ENCODE measurements at regions of chr17 and their contacts with region 1.

Region 1: DNA sequence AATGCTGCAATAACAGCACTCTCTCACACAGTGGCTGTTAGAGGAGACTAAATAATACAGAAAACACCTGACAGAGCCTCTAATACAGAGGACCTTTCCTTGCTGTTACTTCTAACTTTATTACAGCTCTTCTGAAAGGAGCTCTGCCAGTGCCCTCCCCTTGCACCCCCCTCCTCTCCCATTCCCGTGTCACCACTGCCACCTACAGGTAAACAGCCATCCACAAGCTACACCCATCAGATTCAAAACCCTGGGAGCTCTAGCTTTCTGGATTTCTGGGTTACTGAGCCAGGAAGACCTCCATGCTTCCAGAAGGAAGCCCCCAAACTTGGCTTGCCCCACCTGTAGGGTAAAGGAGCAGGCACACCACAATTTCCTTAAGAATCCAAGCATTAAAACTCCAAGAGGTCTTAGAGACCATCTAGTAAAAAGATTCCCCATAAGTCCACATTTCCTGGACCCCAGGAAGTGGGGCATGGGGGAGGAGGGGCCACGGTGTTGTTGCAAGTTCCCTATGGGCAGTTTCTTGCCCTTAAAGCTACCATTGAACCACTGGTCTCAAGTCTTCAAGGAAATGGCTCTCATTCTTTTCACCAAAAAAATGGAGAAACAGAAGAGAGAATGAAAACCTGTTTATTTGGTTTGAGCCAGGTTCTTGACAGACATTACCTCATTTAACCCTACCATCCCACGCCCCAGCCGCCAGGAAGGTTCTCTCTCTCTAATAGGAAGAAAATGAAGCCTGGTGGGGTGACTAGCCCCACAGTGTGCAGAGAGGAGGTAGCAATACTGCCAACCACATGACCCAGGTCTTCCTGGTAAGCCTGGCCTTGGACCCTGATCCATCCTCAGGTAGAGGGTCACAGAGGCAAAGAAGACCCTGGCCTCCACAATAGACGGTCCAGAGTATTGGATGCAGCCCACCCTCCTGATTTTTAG is 52.8 kb downstream of the TOM1L2 start:
- DNase-seq: no peak
- H3K4me3 ChIP-seq: no peak overlapping the region
- H3K27me3 ChIP-seq: no peaks in the 10 kb centered on the region
- CTCF ChIP-seq: peak; percentile 89

Region 2: DNA sequence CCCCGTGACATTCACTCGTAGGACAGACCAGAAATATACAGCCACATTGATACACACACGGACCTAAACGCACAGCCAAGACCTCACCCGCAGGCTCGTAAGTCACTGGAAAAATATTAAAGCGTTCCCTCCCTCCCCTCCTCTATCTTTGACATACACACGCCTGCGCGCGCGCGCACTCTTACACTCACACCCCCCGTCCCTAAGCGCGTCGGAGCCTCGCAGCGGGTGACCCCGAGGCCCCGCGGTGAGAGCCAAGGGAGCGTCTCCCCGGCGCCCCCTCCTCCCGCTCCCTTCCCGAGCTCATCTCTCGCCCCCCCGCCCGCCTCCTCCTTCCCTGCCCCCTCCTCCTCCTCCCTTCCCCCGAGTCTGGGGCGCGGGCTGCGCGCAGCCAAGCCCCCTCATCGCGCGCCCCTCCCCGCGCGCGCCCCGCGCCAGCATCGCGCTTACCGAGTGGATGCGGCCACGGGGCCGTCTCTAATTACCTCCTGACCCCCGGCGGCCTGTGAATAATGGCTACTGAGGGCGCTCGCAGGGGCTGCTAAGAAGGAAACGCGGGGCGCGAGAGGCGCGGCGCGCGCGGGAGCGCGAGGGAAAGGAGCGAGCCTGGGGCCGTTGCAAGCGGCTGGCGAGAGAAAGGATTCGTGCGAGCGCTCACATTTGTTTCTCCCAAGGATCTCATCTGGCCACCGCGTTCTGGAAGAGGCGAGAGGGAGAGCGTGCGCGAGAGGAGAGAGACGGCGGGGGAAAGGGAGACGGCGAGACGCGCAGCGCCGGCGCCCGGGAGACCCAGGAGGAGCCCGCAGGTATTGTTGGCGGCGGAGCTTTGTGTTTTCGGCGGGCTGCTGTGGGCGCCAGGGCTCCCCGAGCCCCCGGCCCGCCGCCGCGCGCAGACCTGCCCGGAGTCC is 195.8 kb before region 1 on chr17:
- CTCF ChIA-PET with region 1: no interaction called
- POLR2A ChIA-PET with region 1: no interaction called
- DNase-seq: no peak
- H3K4me3 ChIP-seq: peak overlapping the region; percentile 47
- H3K27me3 ChIP-seq: no peaks in the 10 kb centered on the region
- CTCF ChIP-seq: no peak

Region 3: GRCh38 chr17:17812211-17813057 is 107.0 kb before region 1 on chr17:
- CTCF ChIA-PET with region 1: interaction called, 17 read pairs
- POLR2A ChIA-PET with region 1: no interaction called
- DNase-seq: no peak
- H3K4me3 ChIP-seq: no peak overlapping the region
- H3K27me3 ChIP-seq: no peaks in the 10 kb centered on the region
- CTCF ChIP-seq: peak; percentile 98

Region 4: GRCh38 chr17:17877529-17878358 is 41.7 kb before region 1 on chr17:
- CTCF ChIA-PET with region 1: interaction called, 10 read pairs
- POLR2A ChIA-PET with region 1: no interaction called
- DNase-seq: peak; percentile 64
- H3K4me3 ChIP-seq: no peak overlapping the region
- H3K27me3 ChIP-seq: no peaks in the 10 kb centered on the region
- CTCF ChIP-seq: peak; percentile 25

Region 5: DNA sequence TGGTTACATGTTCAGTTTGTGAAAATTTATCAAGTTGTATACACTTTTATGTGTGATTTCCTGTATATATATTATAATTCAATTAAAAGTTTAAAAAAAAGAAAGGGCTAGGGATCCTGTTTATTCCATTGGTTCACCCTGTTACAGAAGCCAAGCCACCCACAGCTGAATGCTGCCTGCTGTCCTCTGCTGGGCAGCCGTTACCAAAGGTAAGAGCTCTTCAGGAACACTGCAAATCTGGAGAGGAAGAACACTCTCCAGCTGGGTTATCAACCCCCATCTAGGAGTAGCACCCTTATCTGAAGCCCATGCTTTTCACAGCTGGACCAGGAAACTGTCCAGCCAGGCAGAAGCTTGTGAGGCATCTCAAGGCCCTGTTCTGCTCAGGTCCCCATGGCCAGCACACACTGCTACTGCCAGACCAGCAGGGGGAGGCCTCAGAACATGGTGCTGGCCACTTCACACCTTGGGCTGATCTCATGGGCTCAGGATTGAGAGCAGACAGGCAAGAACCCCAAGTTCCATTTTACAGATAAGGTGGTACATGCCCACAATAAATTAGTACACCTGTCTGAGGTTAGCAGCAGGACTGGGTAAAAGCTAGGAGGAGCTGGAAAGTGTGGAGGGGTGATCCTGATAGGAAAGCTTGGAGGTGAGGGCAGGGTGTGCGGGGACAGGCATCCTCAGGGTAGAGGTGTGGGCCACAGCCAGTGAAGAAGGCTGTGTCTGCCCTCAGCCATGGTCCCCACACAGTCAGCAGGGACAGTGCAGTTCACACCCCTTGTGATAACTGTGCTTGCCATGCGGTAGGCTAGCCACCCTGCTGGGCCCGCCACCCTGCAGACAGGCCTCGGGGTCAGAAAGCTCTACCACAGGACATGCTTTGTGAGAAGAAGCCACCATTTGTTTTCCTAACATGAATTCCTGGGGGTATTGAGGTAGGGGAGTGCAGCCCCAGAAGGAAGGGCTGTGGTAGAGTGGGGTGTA is 28.4 kb before region 1 on chr17:
- CTCF ChIA-PET with region 1: interaction called, 88 read pairs
- POLR2A ChIA-PET with region 1: no interaction called
- DNase-seq: no peak
- H3K4me3 ChIP-seq: no peak overlapping the region
- H3K27me3 ChIP-seq: no peaks in the 10 kb centered on the region
- CTCF ChIP-seq: peak; percentile 95

Region 6: DNA sequence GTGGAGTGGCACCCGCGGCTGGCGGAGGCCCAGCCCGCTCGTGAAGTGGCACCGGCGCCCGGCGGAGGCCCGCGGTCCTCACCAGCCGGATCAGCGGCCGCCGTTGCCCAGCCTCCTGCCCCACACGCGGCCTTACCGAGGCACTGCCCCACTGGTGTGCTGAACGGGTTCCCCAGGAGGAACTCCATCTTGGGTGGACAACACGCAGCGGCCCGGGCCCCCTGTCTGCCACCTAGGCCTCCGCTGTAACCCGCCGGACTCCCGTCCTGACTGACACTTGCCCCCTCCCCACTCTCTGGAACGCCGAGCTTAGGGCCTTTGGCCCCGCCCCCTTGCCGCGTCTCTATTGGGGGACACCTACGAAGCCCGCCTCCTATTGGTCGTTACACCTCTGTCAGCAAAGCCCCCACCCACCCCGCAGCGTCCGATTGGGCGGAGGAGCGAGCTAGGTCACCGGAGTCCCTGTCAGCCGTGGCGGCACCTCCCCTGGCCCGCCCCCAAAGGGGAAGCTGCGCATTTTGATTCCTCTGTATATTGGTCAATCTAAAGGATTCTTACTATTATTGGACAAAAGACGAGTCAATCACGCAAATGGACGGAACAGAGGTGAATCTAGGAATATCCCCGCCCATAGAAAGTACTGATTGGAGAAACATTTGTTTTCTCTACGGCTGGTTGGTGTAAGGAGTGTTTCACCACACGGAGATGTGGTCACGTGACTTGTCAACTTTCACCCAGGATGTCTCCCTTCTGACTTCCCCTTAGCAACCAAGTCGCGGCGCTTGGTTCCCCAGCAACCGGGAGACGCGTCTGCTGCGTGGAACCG is 52.9 kb after region 1 on chr17 and contains the starts of genes DRC3 and TOM1L2:
- CTCF ChIA-PET with region 1: interaction called, 11 read pairs
- POLR2A ChIA-PET with region 1: no interaction called
- DNase-seq: peak; percentile 100
- H3K4me3 ChIP-seq: peak within 1 kb of the TSS; percentile 70
- H3K27me3 ChIP-seq: no peaks in the 10 kb centered on the region
- CTCF ChIP-seq: 0 out of 2 replicates have a peak, but pooled peaks have one; percentile 14
- polyA plus RNA-seq, gene DRC3: 0.93 and 1.2 TPM in 2 replicates
- polyA plus RNA-seq, gene TOM1L2: 30.1 and 39.6 TPM in 2 replicates